ENCODE measurements at regions of chr1 and their contacts with region 1.

Region 1: DNA sequence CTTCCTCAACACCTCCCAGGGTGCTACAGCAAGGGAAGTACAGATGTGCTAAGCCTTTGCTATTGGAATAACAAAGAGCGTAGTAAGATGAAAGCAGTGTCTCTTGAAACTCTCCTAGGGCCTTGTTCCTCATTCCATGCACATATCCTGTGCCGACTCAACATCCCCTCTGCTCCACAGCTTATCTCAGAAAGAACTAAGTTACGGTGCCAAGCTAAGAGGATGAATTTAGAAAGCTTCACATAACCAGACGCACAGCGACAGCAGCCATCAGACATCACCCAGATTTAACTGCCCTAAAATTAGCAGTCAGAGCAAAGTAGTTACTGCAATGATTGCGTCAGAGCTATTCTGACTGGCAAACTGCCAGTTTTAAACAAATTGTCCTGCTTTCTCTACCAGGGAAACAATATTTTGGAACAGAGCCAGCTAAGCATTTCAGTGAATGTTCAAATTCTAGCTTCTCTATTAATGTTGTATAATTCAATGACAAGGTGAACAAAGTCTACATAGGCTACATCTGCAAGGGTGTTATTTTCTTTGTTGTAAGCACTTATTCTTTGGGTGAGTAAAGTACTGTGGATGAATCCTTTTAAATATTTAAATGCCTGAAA is 9.5 kb downstream of the SIPA1L2 start:
- DNase-seq: peak in 2 of 10 donors; percentile 47 to 69
- H3K4me3 ChIP-seq: peak overlapping the region in 39 of 59 donors; percentile 0 to 48 (median 21)
- H3K27ac ChIP-seq: peak overlapping the region in 55 of 59 donors; percentile 5 to 86 (median 72)
- H3K27me3 ChIP-seq: no peaks in the 10 kb centered on the region
- CTCF ChIP-seq: peak in 1 of 56 donors; percentile 13

Region 2: DNA sequence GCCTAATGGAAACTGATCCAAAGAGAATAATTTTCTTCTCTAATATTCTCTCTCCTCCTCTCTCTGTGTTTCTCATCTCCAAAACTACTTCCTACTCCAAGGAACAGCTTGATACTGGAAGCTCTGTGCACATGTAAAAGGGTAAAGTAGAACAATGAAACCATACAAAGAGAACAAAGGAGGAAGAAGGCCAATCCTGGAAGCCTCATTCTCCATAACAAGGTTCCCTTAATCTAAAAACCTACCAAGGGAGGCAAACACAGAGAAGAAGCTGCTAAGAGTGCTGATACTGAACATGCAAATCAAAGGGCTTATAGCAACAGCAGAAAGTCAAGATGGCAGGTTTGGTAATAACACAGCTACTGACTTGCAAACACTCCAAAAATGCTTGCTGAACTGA is 35.0 kb before region 1 on chr1:
- intact Hi-C with region 1: loop called in 1 of 2 experiments (anchors 2 kb)
- DNase-seq: no peak
- H3K4me3 ChIP-seq: peak overlapping the region in 1 of 59 donors; percentile 9
- H3K27ac ChIP-seq: peak overlapping the region in 35 of 59 donors; percentile 1 to 77 (median 39)
- H3K27me3 ChIP-seq: no peaks in the 10 kb centered on the region
- CTCF ChIP-seq: no peak

Region 3: DNA sequence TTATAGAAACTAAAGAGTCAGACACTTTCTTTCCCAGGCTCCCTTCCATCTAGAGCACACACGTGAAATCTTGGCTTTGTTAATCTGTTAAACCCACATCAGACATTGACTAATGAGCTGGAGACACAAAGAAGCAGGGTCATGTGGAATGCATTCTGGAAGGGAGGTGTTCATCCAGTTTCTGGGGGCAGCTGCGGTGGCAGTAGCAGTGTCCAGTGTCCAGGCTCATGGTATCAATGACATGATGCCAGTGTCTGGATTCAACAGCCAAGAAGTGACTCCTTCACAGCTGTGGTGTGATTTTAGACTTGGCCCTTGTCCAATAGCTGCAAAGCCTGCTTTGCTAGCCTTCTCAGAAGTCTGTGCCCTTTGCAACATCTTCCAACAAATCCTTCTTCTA is 425.1 kb after region 1 on chr1:
- intact Hi-C with region 1: no loop called
- DNase-seq: peak in 1 of 10 donors; percentile 11
- H3K4me3 ChIP-seq: no peak overlapping the region
- H3K27ac ChIP-seq: no peak overlapping the region
- H3K27me3 ChIP-seq: no peaks in the 10 kb centered on the region
- CTCF ChIP-seq: no peak